ENCODE measurements at regions of chr2 and their contacts with region 1.

Region 1: DNA sequence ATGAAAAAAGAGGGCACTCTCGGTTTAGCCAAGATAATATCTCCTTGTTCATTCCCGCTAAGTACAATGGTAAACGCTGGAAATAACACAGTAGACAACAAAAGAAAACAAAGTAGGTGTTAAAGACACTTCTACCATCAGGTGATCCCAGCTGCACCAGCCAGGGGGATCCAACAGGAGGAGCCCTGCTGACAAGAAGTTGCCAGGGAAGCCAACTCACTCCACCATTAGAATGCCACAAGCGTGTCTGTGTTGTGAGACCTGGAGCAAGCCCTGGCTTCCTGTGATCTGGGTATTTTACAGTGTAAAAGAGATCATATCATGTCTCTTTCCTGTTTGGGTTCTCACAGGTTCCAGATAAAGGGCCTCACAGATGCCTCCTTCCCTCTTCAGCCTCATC is 117.0 kb downstream of the GRB14 start:
- DNase-seq: no peak
- ATAC-seq: no peak
- H3K4me3 ChIP-seq: no peak overlapping the region
- H3K27ac ChIP-seq: no peak overlapping the region
- H3K4me1 ChIP-seq: no peaks in the 10 kb centered on the region
- H3K27me3 ChIP-seq: no peaks in the 10 kb centered on the region
- CTCF ChIP-seq: 0 out of 2 replicates have a peak, but pooled peaks have one; percentile 7

Region 2: GRCh38 chr2:164593959-164594358 is 89.7 kb after region 1 on chr2:
- CTCF ChIA-PET with region 1: interaction called, 11 read pairs
- POLR2A ChIA-PET with region 1: no interaction called
- in situ Hi-C with region 1: no loop called
- intact Hi-C with region 1: no loop called
- DNase-seq: no peak
- ATAC-seq: no peak
- H3K4me3 ChIP-seq: no peak overlapping the region
- H3K27ac ChIP-seq: no peak overlapping the region
- H3K4me1 ChIP-seq: no peaks in the 10 kb centered on the region
- H3K27me3 ChIP-seq: no peaks in the 10 kb centered on the region
- CTCF ChIP-seq: no peak

Region 3: DNA sequence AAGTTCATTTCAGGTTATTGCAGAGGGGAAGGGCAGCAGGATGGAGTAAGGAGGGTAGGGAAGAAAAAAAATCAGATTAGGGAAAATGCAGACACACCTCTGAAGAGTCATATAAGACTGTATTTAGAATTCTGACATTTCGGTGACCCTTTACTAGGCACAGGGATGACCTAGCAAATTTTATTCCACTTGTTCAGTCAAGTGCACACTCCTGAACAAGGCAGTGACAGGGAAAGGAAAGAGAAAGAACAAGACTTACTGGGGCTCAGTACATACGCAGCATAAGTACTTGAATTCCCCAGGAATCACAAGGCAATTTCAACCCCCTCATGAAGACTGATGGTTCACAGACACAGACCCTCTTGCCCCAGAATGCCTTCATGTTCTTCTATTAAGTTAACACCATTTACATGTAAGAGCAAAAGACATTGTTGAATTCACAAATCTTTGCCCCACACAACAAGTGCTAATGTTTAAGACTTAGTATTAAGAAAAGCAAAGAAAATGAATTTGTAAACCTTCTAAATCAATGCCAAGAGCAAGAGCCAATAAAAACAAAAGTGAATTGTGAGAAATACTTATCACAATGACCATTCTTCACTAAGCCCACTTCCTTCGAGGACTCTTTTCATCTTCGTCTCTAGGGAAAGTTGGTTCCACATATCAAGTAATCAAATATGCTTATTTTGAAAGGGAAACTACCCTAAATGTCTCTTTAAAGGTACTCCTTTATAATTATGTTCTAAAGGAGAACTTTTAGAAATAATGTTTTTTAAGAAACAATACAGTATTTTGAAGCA is 290.4 kb after region 1 on chr2:
- CTCF ChIA-PET with region 1: no interaction called
- POLR2A ChIA-PET with region 1: no interaction called
- in situ Hi-C with region 1: no loop called
- intact Hi-C with region 1: no loop called
- DNase-seq: no peak
- ATAC-seq: no peak
- H3K4me3 ChIP-seq: no peak overlapping the region
- H3K27ac ChIP-seq: no peak overlapping the region
- H3K4me1 ChIP-seq: no peaks in the 10 kb centered on the region
- H3K27me3 ChIP-seq: no peaks in the 10 kb centered on the region
- CTCF ChIP-seq: no peak

Measured in Panc1 (cell line).